ENCODE measurements at regions of chr17 and their contacts with region 1.

Region 1: GRCh38 chr17:31313982-31314784 is at the start of gene EVI2B:
- DNase-seq: peak; percentile 76
- ATAC-seq: peak; percentile 31
- H3K4me3 ChIP-seq: peak within 1 kb of the TSS; percentile 58 to 98 (median 80)
- H3K4me3 Mint-ChIP-seq: peak within 1 kb of the TSS; percentile 86
- H3K27ac ChIP-seq: peak within 1 kb of the TSS; percentile 54 to 70
- H3K27ac Mint-ChIP-seq: peak within 1 kb of the TSS; percentile 91
- H3K4me1 ChIP-seq: peaks cover 27 to 45% of the 10 kb centered on the region in 2 donors
- H3K4me1 Mint-ChIP-seq: peaks cover 61% of the 10 kb centered on the region
- H3K27me3 ChIP-seq: no peaks in the 10 kb centered on the region
- H3K27me3 Mint-ChIP-seq: no peaks in the 10 kb centered on the region
- CTCF ChIP-seq: no peak
- total RNA-seq, gene EVI2B: 125 and 132 TPM in 2 replicates

Region 2: GRCh38 chr17:30831663-30832437 is 482.3 kb before region 1 on chr17 and contains the start of gene ATAD5:
- CTCF ChIA-PET with region 1: no interaction called
- POLR2A ChIA-PET with region 1: no interaction called
- intact Hi-C with region 1: loop called (anchors 5 kb)
- DNase-seq: peak; percentile 91
- ATAC-seq: peak; percentile 100
- H3K4me3 ChIP-seq: peak within 1 kb of the TSS; percentile 73 to 100 (median 78)
- H3K4me3 Mint-ChIP-seq: peak within 1 kb of the TSS; percentile 96
- H3K27ac ChIP-seq: peak within 1 kb of the TSS in 1 of 2 donors; percentile 67
- H3K27ac Mint-ChIP-seq: peak within 1 kb of the TSS; percentile 96
- H3K4me1 ChIP-seq: peaks cover 14% of the 10 kb centered on the region in 2 donors
- H3K4me1 Mint-ChIP-seq: peaks cover 23% of the 10 kb centered on the region
- H3K27me3 ChIP-seq: no peaks in the 10 kb centered on the region
- H3K27me3 Mint-ChIP-seq: no peaks in the 10 kb centered on the region
- CTCF ChIP-seq: no peak
- total RNA-seq, gene ATAD5: 7.3 and 7.4 TPM in 2 replicates

Region 3: DNA sequence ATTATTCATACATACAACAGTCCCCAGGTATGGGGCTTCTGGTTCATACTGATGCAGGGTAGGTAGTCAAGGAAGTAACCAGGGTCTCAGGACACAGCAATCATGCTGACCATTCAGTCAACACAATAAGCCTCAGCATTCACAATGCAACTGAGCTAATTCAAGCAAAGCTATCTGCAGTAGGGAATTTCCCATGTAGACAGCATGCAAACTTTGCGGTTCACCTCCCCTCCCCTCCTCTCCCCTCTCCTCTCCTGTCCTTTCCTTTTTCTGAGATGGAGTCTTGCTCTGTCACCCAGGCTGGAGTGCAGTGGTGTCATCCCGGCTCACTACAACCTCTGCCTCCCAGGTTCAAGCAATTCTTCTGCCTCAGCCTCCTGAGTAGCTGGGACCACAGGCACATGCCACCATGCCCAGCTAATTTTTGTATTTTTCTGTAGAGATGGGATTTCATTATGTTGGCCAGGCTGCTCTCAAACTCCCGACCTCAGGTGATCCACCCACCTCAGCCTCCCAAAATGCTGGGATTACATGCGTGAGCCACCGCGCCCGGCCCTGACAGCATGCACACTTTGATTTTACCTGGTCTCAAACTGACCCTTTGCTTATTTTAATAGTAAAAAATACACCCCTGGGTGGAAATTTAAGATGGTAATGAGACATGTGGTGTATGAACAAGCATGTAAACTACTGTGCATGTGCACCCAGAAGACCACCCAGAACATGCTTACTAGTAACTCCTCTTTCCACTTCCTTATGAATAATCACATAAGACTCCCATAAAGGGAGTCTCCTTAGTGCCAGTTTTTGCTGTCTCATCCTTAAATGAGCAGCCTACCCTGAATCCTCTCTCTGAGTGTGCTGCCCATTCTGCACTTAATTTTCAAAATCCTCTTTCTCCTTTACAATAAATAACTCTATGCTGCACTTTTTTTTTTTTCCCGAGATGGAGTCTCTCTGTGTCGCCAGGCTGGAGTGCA is 352.7 kb before region 1 on chr17:
- CTCF ChIA-PET with region 1: no interaction called
- POLR2A ChIA-PET with region 1: interaction called, 3 read pairs
- intact Hi-C with region 1: loop called (anchors 5 kb)
- DNase-seq: peak; percentile 84
- ATAC-seq: peak; percentile 77
- H3K4me3 ChIP-seq: peak overlapping the region; percentile 10 to 66 (median 38)
- H3K4me3 Mint-ChIP-seq: peak overlapping the region; percentile 65
- H3K27ac ChIP-seq: peak overlapping the region; percentile 57 to 84
- H3K27ac Mint-ChIP-seq: peak overlapping the region; percentile 85
- H3K4me1 ChIP-seq: peaks cover 52 to 61% of the 10 kb centered on the region in 2 donors
- H3K4me1 Mint-ChIP-seq: peaks cover 59% of the 10 kb centered on the region
- H3K27me3 ChIP-seq: no peaks in the 10 kb centered on the region
- H3K27me3 Mint-ChIP-seq: no peaks in the 10 kb centered on the region
- CTCF ChIP-seq: no peak

Region 4: DNA sequence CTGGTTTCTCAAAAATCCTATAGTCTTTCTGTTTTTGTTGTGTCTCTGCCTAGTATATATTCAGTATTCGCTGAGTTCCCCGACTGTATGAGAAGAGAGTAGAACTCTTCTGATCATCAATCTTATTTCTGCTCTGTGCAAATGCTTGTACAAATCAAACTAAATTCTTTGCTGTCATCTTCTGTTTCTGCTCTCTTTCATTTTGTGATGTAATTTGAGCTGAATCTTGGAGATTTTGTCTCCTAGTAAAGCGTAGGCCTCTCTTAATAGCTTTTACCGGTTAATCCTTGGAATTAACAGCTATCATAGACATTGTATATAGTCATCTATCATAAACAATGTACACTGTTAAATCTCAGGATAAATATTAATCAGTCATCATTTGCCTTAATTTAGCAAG is 79.1 kb before region 1 on chr17:
- CTCF ChIA-PET with region 1: no interaction called
- POLR2A ChIA-PET with region 1: no interaction called
- intact Hi-C with region 1: no loop called
- DNase-seq: no peak
- ATAC-seq: no peak
- H3K4me3 ChIP-seq: no peak overlapping the region
- H3K4me3 Mint-ChIP-seq: no peak overlapping the region
- H3K27ac ChIP-seq: no peak overlapping the region
- H3K27ac Mint-ChIP-seq: no peak overlapping the region
- H3K4me1 ChIP-seq: peaks cover 10 to 16% of the 10 kb centered on the region in 2 donors
- H3K4me1 Mint-ChIP-seq: peaks cover 12% of the 10 kb centered on the region
- H3K27me3 ChIP-seq: no peaks in the 10 kb centered on the region
- H3K27me3 Mint-ChIP-seq: no peaks in the 10 kb centered on the region
- CTCF ChIP-seq: no peak

Region 5: DNA sequence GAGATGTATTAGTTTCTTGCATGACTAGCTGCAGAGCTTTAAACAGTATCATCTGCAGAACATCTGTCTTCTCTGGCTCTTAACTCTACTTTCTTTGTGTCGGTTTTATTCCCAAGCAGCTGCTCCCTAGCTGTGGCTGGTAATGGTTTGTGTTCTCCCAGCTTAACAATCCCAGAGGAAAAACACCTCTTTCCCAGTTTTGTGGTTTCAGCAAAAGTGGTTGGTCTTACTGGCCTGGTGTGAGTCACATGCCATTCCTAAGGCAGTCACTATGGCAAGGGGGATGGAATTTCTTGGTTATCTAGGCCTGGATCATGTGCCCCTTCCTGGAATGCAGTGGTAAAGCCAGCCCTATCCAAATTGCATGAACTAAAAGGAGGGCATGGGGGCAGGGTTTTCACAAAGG is 44.6 kb before region 1 on chr17:
- CTCF ChIA-PET with region 1: interaction called, 4 read pairs
- POLR2A ChIA-PET with region 1: interaction called, 5 read pairs
- intact Hi-C with region 1: loop called (anchors 5 kb)
- DNase-seq: no peak
- ATAC-seq: no peak
- H3K4me3 ChIP-seq: no peak overlapping the region
- H3K4me3 Mint-ChIP-seq: no peak overlapping the region
- H3K27ac ChIP-seq: no peak overlapping the region
- H3K27ac Mint-ChIP-seq: no peak overlapping the region
- H3K4me1 ChIP-seq: no peaks in the 10 kb centered on the region
- H3K4me1 Mint-ChIP-seq: no peaks in the 10 kb centered on the region
- H3K27me3 ChIP-seq: no peaks in the 10 kb centered on the region
- H3K27me3 Mint-ChIP-seq: no peaks in the 10 kb centered on the region
- CTCF ChIP-seq: no peak

Region 6: DNA sequence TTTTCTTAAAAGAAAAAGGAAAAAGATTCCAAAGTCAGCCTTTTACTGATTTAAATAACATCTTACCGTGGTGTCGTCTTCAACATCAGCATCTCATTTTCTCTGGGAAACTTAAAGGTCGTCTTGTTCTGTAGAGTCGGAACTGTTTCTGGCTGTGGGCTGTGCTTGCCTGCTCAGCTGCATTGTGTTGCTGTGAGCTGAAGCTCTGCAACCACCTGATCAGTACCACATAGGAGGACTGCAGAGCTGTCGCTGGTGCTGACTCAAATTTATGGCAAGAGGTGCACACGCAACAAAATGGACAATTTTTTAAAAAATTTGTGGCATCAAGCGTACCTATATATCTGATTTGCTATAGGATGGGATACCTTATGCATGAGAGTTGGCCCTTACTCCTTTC is 17.1 kb before region 1 on chr17 and contains the start of gene OMG:
- CTCF ChIA-PET with region 1: no interaction called
- POLR2A ChIA-PET with region 1: no interaction called
- intact Hi-C with region 1: no loop called
- DNase-seq: no peak
- ATAC-seq: no peak
- H3K4me3 ChIP-seq: no peak within 1 kb of the TSS
- H3K4me3 Mint-ChIP-seq: no peak within 1 kb of the TSS
- H3K27ac ChIP-seq: no peak within 1 kb of the TSS
- H3K27ac Mint-ChIP-seq: no peak within 1 kb of the TSS
- H3K4me1 ChIP-seq: no peaks in the 10 kb centered on the region
- H3K4me1 Mint-ChIP-seq: peaks cover 5% of the 10 kb centered on the region
- H3K27me3 ChIP-seq: no peaks in the 10 kb centered on the region
- H3K27me3 Mint-ChIP-seq: no peaks in the 10 kb centered on the region
- CTCF ChIP-seq: no peak
- total RNA-seq, gene OMG: 0.39 and 0.49 TPM in 2 replicates

Region 7: DNA sequence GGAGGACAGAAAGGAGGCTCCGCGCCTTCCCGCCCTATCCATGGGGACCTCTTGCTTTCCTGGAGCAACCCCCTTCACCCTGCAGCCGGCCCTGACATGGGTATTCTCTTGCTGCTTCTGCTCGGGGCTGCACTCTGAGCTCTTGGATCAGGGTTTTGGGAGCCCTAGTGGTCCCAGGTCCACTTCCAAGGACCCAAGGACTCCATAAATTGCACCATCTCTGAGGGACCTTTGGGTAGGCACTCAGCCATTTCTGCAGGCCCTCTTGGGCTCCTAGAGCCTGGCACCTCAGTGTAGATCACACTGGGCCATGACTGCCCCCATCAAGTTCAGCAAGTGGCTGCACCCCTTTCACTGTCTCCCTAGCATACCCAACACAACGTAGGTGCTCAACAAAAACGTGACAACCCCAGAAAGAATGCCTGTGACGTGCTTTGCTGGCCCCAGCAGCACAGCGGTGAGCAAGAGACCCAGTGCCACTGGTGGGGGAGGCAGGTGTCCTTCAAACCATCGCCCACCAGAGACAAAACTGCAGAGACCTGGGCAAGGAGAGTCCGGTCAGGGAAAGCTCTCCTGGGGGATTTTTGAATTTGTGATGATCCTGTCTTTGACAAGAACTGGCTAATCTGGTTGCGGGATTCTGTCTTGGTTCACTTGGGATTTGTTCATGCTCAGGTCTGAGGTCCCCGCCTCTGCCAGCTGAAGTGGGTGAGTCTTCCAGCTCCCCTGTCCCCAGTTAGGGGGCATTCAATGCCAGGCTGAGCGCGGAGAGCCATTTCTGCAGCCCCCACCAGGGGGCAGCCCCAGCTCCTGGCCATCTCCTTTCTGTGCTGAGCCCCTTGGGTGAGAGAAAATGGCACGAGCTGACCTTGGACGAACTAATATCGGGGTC is 74.8 kb after region 1 on chr17:
- CTCF ChIA-PET with region 1: no interaction called
- POLR2A ChIA-PET with region 1: no interaction called
- intact Hi-C with region 1: no loop called
- DNase-seq: peak; percentile 70
- ATAC-seq: peak; percentile 62
- H3K4me3 ChIP-seq: no peak overlapping the region
- H3K4me3 Mint-ChIP-seq: peak overlapping the region; percentile 77
- H3K27ac ChIP-seq: no peak overlapping the region
- H3K27ac Mint-ChIP-seq: no peak overlapping the region
- H3K4me1 ChIP-seq: peaks cover 16 to 17% of the 10 kb centered on the region in 2 donors
- H3K4me1 Mint-ChIP-seq: peaks cover 15% of the 10 kb centered on the region
- H3K27me3 ChIP-seq: peaks cover 0 to 45% (median 20%) of the 10 kb centered on the region in 4 experiments
- H3K27me3 Mint-ChIP-seq: peaks cover 40% of the 10 kb centered on the region
- CTCF ChIP-seq: peak; percentile 77